MCF 10A (cell line): ENCODE measurements at regions of chr12 and their contacts with region 1.

Region 1: GRCh38 chr12:93378373-93379325 is 924 bp downstream of the NUDT4 start:
- DNase-seq: peak; percentile 64
- H3K4me3 Mint-ChIP-seq: peak overlapping the region; percentile 98
- H3K27ac Mint-ChIP-seq: peak overlapping the region; percentile 50
- H3K4me1 Mint-ChIP-seq: peaks cover 24% of the 10 kb centered on the region
- H3K27me3 Mint-ChIP-seq: no peaks in the 10 kb centered on the region
- CTCF ChIP-seq: no peak

Region 2: GRCh38 chr12:93019975-93020630 is 358.5 kb before region 1 on chr12:
- CTCF ChIA-PET with region 1: interaction called, 14 read pairs
- POLR2A ChIA-PET with region 1: interaction called, 3 read pairs
- intact Hi-C with region 1: loop called (anchors 1 kb)
- DNase-seq: no peak
- H3K4me3 Mint-ChIP-seq: no peak overlapping the region
- H3K27ac Mint-ChIP-seq: no peak overlapping the region
- H3K4me1 Mint-ChIP-seq: no peaks in the 10 kb centered on the region
- H3K27me3 Mint-ChIP-seq: no peaks in the 10 kb centered on the region
- CTCF ChIP-seq: no peak

Region 3: GRCh38 chr12:93098077-93098476 is 280.6 kb before region 1 on chr12:
- CTCF ChIA-PET with region 1: interaction called, 11 read pairs
- POLR2A ChIA-PET with region 1: interaction called, 3 read pairs
- intact Hi-C with region 1: loop called (anchors 2 kb)
- DNase-seq: peak; percentile 59
- H3K4me3 Mint-ChIP-seq: no peak overlapping the region
- H3K27ac Mint-ChIP-seq: no peak overlapping the region
- H3K4me1 Mint-ChIP-seq: no peaks in the 10 kb centered on the region
- H3K27me3 Mint-ChIP-seq: no peaks in the 10 kb centered on the region
- CTCF ChIP-seq: peak; percentile 28

Region 4: DNA sequence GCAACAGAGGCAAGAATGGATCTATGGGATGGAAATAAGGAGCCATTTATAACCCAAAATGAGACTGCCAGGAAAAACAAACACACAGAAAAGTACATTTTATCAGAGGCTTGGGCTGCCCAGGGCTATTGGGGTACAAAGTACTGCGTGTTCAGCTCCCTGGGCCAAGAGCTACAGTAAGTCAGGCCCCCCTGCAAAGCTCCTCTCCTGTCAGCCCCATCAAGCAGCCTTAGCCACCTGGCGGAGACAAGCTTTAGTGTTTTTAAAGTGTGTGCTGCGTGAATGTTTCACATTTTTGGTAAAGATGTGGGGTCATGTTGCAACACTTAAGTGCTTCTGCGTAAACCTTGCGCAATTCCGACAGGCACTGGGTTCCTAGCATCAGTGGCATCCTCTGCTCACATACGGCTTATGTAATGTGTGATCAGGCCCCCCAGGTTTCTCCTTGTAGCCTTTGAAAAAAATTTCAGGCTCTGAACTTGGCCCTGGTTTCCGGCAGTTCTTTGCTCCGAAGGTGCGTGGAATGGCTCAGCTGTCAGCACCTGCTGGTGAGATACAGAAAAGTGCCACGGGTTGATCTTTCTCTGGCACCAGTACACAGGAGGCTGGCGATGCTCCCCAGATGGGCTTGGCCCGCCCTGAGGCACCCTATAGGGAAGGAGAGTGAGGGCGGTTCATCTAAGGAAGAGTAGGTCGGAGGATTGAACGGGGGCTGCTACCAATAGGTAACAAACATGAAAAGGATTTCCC is 250.9 kb before region 1 on chr12:
- CTCF ChIA-PET with region 1: interaction called, 29 read pairs
- POLR2A ChIA-PET with region 1: interaction called, 53 read pairs
- intact Hi-C with region 1: loop called (anchors 2 kb)
- DNase-seq: peak; percentile 96
- H3K4me3 Mint-ChIP-seq: peak overlapping the region; percentile 49
- H3K27ac Mint-ChIP-seq: peak overlapping the region; percentile 81
- H3K4me1 Mint-ChIP-seq: peaks cover 33% of the 10 kb centered on the region
- H3K27me3 Mint-ChIP-seq: no peaks in the 10 kb centered on the region
- CTCF ChIP-seq: peak; percentile 33

Region 5: DNA sequence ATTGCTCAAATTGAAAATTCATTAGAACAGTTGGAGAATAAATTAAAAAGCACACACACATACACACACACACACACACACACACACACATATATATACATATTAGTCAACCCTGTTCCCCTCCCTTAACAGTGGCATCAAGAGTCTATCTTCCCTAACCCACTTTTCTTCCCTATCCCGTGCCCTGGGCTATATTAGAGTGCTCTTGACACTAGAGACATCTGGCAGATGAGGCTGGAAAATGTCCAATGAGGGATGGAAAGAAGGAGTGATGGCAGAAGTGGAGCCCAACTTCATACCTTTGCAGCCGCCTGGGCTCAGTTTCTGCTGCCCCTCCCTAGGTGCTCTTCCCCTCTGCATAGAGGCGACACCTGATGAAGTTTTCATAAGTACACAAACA is 173.3 kb before region 1 on chr12:
- CTCF ChIA-PET with region 1: no interaction called
- POLR2A ChIA-PET with region 1: no interaction called
- intact Hi-C with region 1: no loop called
- DNase-seq: no peak
- H3K4me3 Mint-ChIP-seq: no peak overlapping the region
- H3K27ac Mint-ChIP-seq: no peak overlapping the region
- H3K4me1 Mint-ChIP-seq: peaks cover 9% of the 10 kb centered on the region
- H3K27me3 Mint-ChIP-seq: no peaks in the 10 kb centered on the region
- CTCF ChIP-seq: no peak

Region 6: GRCh38 chr12:93243689-93244513 is 134.7 kb before region 1 on chr12:
- CTCF ChIA-PET with region 1: interaction called, 9 read pairs
- POLR2A ChIA-PET with region 1: interaction called, 17 read pairs
- intact Hi-C with region 1: loop called (anchors 5 kb)
- DNase-seq: peak; percentile 91
- H3K4me3 Mint-ChIP-seq: peak overlapping the region; percentile 56
- H3K27ac Mint-ChIP-seq: peak overlapping the region; percentile 69
- H3K4me1 Mint-ChIP-seq: peaks cover 25% of the 10 kb centered on the region
- H3K27me3 Mint-ChIP-seq: no peaks in the 10 kb centered on the region
- CTCF ChIP-seq: no peak

Region 7: GRCh38 chr12:93979189-93979588 is 600.5 kb after region 1 on chr12:
- CTCF ChIA-PET with region 1: no interaction called
- POLR2A ChIA-PET with region 1: no interaction called
- intact Hi-C with region 1: no loop called
- DNase-seq: peak; percentile 56
- H3K4me3 Mint-ChIP-seq: no peak overlapping the region
- H3K27ac Mint-ChIP-seq: peak overlapping the region; percentile 75
- H3K4me1 Mint-ChIP-seq: peaks cover 39% of the 10 kb centered on the region
- H3K27me3 Mint-ChIP-seq: no peaks in the 10 kb centered on the region
- CTCF ChIP-seq: peak; percentile 36